ENCODE measurements at regions of chr10 and their contacts with region 1.

Region 1: DNA sequence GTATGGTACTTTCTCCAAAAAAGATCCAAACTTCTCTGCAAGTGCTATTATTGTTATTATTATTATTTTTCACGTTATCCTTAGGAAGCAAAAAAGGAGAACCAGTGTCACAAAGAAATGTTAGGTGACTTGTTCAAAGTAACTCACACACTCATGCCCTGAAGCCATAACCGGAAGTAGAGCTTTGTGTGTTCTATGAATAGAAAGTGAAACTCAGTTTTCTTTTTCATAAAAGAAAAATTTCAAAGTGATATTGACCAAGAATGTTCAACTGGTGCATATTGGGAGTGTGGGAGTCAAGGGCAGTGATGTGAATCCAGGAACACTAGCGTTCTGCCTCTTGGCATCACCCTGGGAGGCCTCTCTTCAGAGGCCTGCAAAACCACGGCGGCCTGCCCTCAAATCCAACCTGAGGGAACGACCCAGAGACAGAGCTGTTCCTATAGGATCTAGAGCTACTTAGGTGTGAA is 106.1 kb downstream of the PRKCQ start:
- DNase-seq: peak; percentile 49
- ATAC-seq: peak; percentile 82
- H3K4me3 Mint-ChIP-seq: peak overlapping the region; percentile 80
- H3K27ac Mint-ChIP-seq: peak overlapping the region; percentile 96
- H3K4me1 Mint-ChIP-seq: peaks cover 67% of the 10 kb centered on the region
- H3K27me3 Mint-ChIP-seq: no peaks in the 10 kb centered on the region
- CTCF ChIP-seq: no peak

Region 2: DNA sequence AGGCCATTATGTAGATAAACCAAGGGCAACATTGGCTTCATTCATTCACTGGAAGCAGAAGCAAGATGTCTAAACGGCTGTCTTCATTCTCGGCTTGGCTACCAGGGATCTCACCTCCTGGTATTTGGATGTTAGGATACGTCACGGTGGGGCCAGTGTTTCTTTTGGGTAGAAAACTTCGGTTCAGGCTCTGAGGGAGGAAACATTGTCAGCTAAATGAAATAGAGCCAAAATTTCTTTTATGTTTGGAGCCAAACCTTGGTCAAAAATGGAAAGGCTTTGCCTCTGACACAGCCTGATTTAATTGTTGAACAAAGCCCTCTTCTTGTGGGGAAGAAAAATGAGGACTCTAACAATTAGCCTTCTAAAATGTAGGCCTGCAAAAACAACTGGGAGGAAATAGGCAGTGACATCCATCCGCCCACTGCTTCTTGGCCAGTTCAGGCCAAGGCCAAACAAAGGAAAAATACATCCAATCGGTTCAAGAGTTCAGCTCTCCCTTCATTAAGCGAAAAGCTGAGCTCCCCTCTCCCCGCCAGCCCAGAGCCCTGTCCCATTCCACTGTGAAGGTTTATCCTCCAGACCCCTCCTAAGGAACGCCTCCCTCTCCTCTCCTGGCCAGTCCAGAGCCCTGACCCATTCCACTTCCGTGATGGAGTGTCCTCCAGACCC is 226.8 kb before region 1 on chr10:
- CTCF ChIA-PET with region 1: no interaction called
- POLR2A ChIA-PET with region 1: no interaction called
- intact Hi-C with region 1: no loop called
- DNase-seq: no peak
- ATAC-seq: no peak
- H3K4me3 Mint-ChIP-seq: no peak overlapping the region
- H3K27ac Mint-ChIP-seq: no peak overlapping the region
- H3K4me1 Mint-ChIP-seq: no peaks in the 10 kb centered on the region
- H3K27me3 Mint-ChIP-seq: no peaks in the 10 kb centered on the region
- CTCF ChIP-seq: no peak

Region 3: GRCh38 chr10:6431861-6432260 is 42.1 kb before region 1 on chr10:
- CTCF ChIA-PET with region 1: no interaction called
- POLR2A ChIA-PET with region 1: no interaction called
- intact Hi-C with region 1: no loop called
- DNase-seq: no peak
- ATAC-seq: no peak
- H3K4me3 Mint-ChIP-seq: no peak overlapping the region
- H3K27ac Mint-ChIP-seq: no peak overlapping the region
- H3K4me1 Mint-ChIP-seq: no peaks in the 10 kb centered on the region
- H3K27me3 Mint-ChIP-seq: no peaks in the 10 kb centered on the region
- CTCF ChIP-seq: no peak

Region 4: DNA sequence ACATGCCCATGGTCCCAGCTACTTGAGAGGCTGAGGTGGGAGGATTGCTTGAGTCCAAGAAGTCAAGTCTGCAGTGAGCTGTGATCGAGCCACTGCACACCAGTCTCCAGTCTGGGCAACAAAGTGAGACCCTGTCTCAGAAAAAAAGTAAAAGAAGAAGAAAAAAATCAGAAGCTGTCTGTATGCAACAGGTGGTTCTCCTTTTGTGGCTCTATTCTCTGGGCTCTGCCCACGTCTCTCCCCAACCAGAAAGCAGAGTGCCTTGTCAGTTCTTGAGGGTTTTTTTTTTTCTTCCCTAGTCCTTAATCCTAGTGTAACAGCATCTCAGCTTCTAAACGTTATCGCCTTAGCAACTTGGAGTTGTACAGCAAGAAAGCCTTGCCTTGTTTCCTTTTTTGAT is 16.7 kb after region 1 on chr10:
- CTCF ChIA-PET with region 1: interaction called, 27 read pairs
- POLR2A ChIA-PET with region 1: interaction called, 10 read pairs
- intact Hi-C with region 1: loop called (anchors 2 kb)
- DNase-seq: no peak
- ATAC-seq: no peak
- H3K4me3 Mint-ChIP-seq: no peak overlapping the region
- H3K27ac Mint-ChIP-seq: peak overlapping the region; percentile 96
- H3K4me1 Mint-ChIP-seq: peaks cover 44% of the 10 kb centered on the region
- H3K27me3 Mint-ChIP-seq: no peaks in the 10 kb centered on the region
- CTCF ChIP-seq: no peak

Region 5: DNA sequence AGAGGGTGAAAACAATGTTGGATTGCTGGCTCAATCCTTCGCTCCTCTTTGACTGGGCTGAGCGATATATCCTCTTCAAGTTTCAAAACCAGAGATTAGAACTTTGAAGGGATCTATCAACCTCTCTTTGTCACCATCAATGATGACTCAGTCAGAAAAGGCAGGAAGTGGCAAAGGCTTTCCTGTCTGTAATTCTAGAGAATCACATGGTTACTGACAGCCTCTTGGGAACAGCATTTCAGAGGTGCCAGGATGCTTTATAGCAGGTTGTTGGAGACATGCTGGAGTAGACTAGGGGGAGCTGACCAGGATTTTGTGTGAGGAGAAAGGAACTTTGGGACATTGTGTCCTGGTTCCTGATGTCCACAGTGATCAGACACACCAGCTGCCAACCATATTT is 24.8 kb after region 1 on chr10:
- CTCF ChIA-PET with region 1: interaction called, 27 read pairs
- POLR2A ChIA-PET with region 1: interaction called, 9 read pairs
- intact Hi-C with region 1: loop called (anchors 2 kb)
- DNase-seq: peak; percentile 51
- ATAC-seq: peak; percentile 62
- H3K4me3 Mint-ChIP-seq: peak overlapping the region; percentile 33
- H3K27ac Mint-ChIP-seq: peak overlapping the region; percentile 89
- H3K4me1 Mint-ChIP-seq: peaks cover 31% of the 10 kb centered on the region
- H3K27me3 Mint-ChIP-seq: no peaks in the 10 kb centered on the region
- CTCF ChIP-seq: no peak

Region 6: GRCh38 chr10:6514844-6515780 is 41.2 kb after region 1 on chr10:
- CTCF ChIA-PET with region 1: interaction called, 4 read pairs
- POLR2A ChIA-PET with region 1: no interaction called
- intact Hi-C with region 1: loop called (anchors 5 kb)
- DNase-seq: no peak
- ATAC-seq: no peak
- H3K4me3 Mint-ChIP-seq: no peak overlapping the region
- H3K27ac Mint-ChIP-seq: peak overlapping the region; percentile 48
- H3K4me1 Mint-ChIP-seq: peaks cover 90% of the 10 kb centered on the region
- H3K27me3 Mint-ChIP-seq: no peaks in the 10 kb centered on the region
- CTCF ChIP-seq: no peak

Measured in activated CD8-positive, alpha-beta T cell treated with anti-CD3 and anti-CD28 coated beads for 36 hours (primary cell).